Pancreas (tissue), 10 donors: ENCODE measurements at regions of chr19 and their contacts with region 1.

Region 1: DNA sequence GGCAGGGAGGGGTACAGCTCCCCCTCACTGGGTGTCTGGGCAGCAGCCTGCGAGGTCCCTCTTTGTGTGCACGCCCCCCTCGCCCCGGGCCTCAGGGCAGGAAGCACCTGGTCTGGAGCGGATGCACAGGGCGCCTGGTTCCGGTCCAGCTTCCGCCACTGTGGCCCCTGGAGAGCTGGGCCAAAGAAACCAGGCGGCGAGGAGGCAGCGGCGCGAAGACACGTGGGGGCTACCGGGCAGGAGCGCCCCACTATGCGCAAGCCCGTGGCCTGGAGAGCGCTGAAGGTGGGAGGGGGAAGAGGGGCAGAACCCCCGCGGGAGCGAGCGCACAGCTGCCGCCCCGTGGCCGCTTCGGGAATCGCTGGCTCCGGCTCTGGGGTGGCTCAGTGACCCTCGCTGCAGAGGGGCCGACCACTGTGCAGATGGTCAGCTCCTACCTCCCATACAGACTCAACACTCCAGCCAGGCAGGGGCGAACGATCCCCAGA is 1.7 kb upstream of the LYL1 start:
- DNase-seq: peak in 2 of 6 donors; percentile 47 to 71
- ATAC-seq: peak in 3 of 4 donors; percentile 13 to 39 (median 13)
- H3K4me3 ChIP-seq: peak overlapping the region in 1 of 4 donors; percentile 11
- H3K27ac ChIP-seq: peak overlapping the region in 2 of 4 donors; percentile 8 to 54
- H3K4me1 ChIP-seq: peaks cover 0 to 7% (median 0%) of the 10 kb centered on the region in 3 donors
- H3K27me3 ChIP-seq: no peaks in the 10 kb centered on the region
- CTCF ChIP-seq: peak in 3 of 4 donors; percentile 24 to 47 (median 24)

Region 2: GRCh38 chr19:12952488-12953137 is 151.8 kb before region 1 on chr19:
- intact Hi-C with region 1: no loop called
- DNase-seq: no peak
- ATAC-seq: no peak
- H3K4me3 ChIP-seq: no peak overlapping the region
- H3K27ac ChIP-seq: no peak overlapping the region
- H3K4me1 ChIP-seq: peaks cover under 1 to 9% (median 7%) of the 10 kb centered on the region in 3 donors
- H3K27me3 ChIP-seq: no peaks in the 10 kb centered on the region
- CTCF ChIP-seq: no peak

Region 3: DNA sequence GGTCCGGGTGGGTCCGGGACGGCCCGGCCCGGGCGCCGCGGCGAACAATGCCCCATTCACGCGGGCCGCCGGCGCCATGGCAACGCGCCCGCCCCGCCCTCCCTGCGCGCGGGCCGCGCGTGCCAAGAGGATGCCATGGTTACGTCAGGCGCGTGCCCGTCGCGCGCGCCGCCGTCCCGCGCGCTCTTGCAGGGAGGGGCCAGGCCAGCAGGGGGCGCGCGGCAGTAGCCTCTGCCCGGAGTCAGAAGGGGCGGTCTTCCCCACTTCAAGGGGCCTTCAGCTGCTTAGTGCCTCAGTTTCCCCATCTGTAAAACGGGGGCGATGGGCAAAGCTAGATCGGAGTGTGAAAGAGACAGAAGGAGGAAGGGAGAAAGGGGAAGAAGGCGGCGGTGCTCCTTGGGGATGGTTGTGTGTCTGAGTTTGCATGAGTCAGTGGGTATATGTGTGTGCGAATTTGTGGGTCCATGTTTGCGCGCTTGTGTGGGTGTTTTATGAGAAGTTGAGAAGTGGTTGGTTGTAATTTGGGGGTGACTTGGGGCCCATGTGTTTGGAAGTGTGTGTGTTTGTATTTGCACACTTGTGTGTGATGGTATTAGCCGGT is 120.8 kb before region 1 on chr19:
- intact Hi-C with region 1: no loop called
- DNase-seq: peak; percentile 65 to 95 (median 87)
- ATAC-seq: peak; percentile 91 to 95 (median 91)
- H3K4me3 ChIP-seq: peak overlapping the region in 1 of 4 donors; percentile 26
- H3K27ac ChIP-seq: no peak overlapping the region
- H3K4me1 ChIP-seq: peaks cover 0 to 3% (median 0%) of the 10 kb centered on the region in 3 donors
- H3K27me3 ChIP-seq: no peaks in the 10 kb centered on the region
- CTCF ChIP-seq: peak; percentile 86 to 95 (median 94)

Region 4: GRCh38 chr19:13190781-13191540 is 86.6 kb after region 1 on chr19:
- intact Hi-C with region 1: no loop called
- DNase-seq: peak in 1 of 6 donors; percentile 45
- ATAC-seq: peak in 2 of 4 donors; percentile 28 to 51
- H3K4me3 ChIP-seq: no peak overlapping the region
- H3K27ac ChIP-seq: no peak overlapping the region
- H3K4me1 ChIP-seq: peaks cover 0 to 6% (median 0%) of the 10 kb centered on the region in 3 donors
- H3K27me3 ChIP-seq: no peaks in the 10 kb centered on the region
- CTCF ChIP-seq: no peak

Region 5: DNA sequence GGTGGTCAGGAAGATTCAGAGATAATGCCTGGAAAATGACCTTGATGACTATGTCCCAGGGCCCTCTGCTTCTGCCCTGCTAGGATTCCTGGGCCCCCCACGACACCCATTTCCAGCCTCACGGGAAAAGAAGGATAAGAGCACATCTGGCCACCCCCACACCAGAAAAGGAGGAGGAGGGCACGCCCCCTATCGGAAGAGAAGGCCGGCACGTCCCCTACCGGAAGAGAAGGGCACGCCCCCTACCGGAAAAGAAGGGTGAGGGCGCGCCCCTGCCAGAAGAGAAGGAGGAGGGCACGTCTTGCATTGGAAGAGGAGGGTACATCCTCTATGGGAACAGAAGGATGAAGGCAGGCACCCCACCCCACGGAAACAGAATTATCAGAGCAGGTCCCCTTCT is 130.1 kb after region 1 on chr19:
- intact Hi-C with region 1: loop called in 1 of 3 experiments (anchors 10 kb)
- DNase-seq: peak in 5 of 6 donors; percentile 53 to 85 (median 61)
- ATAC-seq: peak; percentile 60 to 99 (median 90)
- H3K4me3 ChIP-seq: no peak overlapping the region
- H3K27ac ChIP-seq: no peak overlapping the region
- H3K4me1 ChIP-seq: no peaks in the 10 kb centered on the region
- H3K27me3 ChIP-seq: no peaks in the 10 kb centered on the region
- CTCF ChIP-seq: peak; percentile 11 to 73 (median 57)